Left ventricle myocardium inferior (tissue), 1 donor: ENCODE measurements at regions of chr4 and their contacts with region 1.

Region 1: DNA sequence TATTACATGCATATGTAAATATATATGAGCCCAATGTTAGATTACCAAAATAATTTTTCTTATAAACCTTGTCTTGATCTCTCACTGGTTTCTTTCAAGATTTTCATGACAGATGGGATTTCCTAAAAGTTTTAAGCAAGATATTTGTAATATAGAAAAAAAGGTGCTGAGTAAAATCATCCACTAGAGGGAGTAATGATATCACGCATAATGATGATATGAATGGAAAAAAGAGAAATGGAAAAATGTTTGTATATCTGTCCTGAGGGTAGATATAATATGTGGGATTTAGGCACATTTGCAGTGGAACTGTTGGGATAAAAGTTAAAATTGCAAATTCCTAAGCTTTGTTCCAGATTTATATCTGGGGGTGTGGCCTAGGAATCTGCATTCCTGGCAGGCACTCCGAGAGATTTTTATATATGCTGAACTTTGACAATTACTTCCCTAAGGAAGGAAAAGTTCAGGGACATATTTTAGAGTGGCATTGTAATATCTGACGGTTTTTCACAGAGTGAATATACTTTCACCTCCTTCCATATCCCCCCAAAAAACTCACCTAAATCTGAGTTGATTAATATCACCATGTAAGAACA is 60.5 kb downstream of the TMA16 start:
- DNase-seq: no peak
- H3K4me3 ChIP-seq: no peak overlapping the region
- H3K27ac ChIP-seq: no peak overlapping the region
- H3K4me1 ChIP-seq: peaks cover 18% of the 10 kb centered on the region
- H3K27me3 ChIP-seq: no peaks in the 10 kb centered on the region
- CTCF ChIP-seq: peak; percentile 74

Region 2: GRCh38 chr4:163148466-163149336 is 406.3 kb before region 1 on chr4:
- intact Hi-C with region 1: no loop called
- DNase-seq: no peak
- H3K4me3 ChIP-seq: no peak overlapping the region
- H3K27ac ChIP-seq: no peak overlapping the region
- H3K4me1 ChIP-seq: peaks cover 12% of the 10 kb centered on the region
- H3K27me3 ChIP-seq: no peaks in the 10 kb centered on the region
- CTCF ChIP-seq: no peak

Region 3: DNA sequence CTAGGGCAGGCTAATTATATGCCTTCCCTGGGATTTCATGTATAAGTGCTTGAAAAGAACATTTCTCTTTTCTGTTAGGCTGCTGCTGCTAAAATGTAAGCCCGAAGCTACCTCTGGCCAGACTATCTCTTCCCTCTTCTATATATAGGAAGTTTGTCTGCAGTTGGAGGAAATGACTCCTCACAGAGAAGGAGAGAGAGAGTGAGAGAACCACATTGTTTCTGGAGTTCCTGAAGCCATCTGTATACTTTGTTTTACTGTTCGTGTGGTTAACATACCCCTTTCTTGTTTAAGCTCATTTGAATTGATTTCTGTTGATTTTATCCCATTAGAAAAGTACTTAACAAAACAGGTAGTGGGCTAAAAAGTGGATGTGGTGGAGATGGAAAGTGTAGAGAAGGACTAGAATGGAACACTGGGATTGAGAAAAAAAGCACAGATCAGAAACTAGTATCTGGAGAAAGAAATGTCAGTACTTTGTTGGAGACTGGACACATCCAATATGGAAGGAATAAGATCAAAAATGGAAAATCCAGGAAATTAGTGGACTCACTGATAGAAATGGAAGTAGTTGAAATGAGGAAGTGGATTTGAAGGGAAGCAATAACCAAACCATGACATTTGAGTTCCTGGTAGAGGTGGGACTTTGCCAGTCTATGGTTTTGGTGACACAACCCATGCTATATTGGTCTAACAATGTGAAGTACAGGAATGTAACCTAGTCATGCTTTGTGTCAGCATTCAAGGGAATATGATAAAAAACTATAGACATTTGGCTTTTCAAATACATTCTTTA is 52.1 kb after region 1 on chr4:
- intact Hi-C with region 1: loop called (anchors 2 kb)
- DNase-seq: no peak
- H3K4me3 ChIP-seq: no peak overlapping the region
- H3K27ac ChIP-seq: no peak overlapping the region
- H3K4me1 ChIP-seq: no peaks in the 10 kb centered on the region
- H3K27me3 ChIP-seq: no peaks in the 10 kb centered on the region
- CTCF ChIP-seq: no peak

Region 4: GRCh38 chr4:163681208-163681821 is 126.3 kb after region 1 on chr4:
- intact Hi-C with region 1: loop called (anchors 10 kb)
- DNase-seq: no peak
- H3K4me3 ChIP-seq: no peak overlapping the region
- H3K27ac ChIP-seq: no peak overlapping the region
- H3K4me1 ChIP-seq: no peaks in the 10 kb centered on the region
- H3K27me3 ChIP-seq: no peaks in the 10 kb centered on the region
- CTCF ChIP-seq: peak; percentile 60

Region 5: GRCh38 chr4:164731827-164732474 is 1177.0 kb after region 1 on chr4:
- intact Hi-C with region 1: loop called (anchors 10 kb)
- DNase-seq: peak; percentile 14
- H3K4me3 ChIP-seq: no peak overlapping the region
- H3K27ac ChIP-seq: no peak overlapping the region
- H3K4me1 ChIP-seq: peaks cover 5% of the 10 kb centered on the region
- H3K27me3 ChIP-seq: no peaks in the 10 kb centered on the region
- CTCF ChIP-seq: peak; percentile 80